Activated CD4-positive, alpha-beta memory T cell treated with anti-CD3 and anti-CD28 coated beads for 36 hours (primary cell): ENCODE measurements at regions of chr3 and their contacts with region 1.

Region 1: GRCh38 chr3:142723968-142724681 is at the start of gene TRPC1:
- DNase-seq: peak; percentile 87
- H3K4me3 Mint-ChIP-seq: peak within 1 kb of the TSS; percentile 85
- H3K27ac Mint-ChIP-seq: peak within 1 kb of the TSS; percentile 82
- H3K4me1 Mint-ChIP-seq: peaks cover 14% of the 10 kb centered on the region
- H3K27me3 Mint-ChIP-seq: peaks cover 15% of the 10 kb centered on the region
- total RNA-seq, gene TRPC1: 2.8 to 3.8 TPM

Region 2: DNA sequence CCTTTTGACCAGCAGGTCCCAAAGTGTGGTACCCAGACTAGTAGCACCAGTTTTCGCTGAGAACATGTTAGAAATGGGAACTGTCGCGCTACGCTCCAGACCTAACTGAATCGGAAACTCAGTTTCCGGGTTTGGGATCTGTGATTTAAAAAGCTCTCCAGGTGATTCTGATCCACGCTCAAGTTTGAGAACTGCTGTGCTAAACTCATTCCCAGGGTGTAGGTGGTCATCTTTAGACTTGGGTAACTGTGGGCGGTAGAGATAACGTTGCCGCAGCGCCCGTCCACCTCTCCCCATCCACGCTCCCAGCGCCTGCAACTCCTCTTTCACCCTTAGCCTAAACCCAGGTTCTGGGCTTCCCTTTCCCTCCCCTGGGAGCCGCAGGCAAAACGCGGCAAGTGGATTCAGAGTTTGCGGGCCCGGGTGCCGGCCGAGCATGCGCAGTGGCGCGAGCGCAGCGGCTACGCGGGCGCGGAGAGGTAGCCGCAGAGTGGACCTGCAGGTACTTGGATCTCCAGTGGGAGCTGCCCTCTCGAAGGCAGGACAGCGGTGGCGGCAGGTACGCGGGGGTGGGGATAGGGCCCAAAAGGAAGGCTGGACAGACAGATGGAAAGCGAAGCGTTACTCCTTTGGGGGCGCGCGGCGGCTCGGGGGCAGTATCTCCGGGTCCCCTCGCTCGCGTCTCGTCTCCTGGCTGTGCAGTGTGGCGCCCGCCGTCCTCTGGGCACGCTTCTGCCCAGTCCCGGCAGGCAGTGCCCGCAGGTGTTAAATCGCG is 128.0 kb before region 1 on chr3 and contains the start of gene PLS1:
- CTCF ChIA-PET with region 1: no interaction called
- POLR2A ChIA-PET with region 1: interaction called, 5 read pairs
- intact Hi-C with region 1: loop called (anchors 1 kb)
- DNase-seq: peak; percentile 91
- H3K4me3 Mint-ChIP-seq: peak within 1 kb of the TSS; percentile 89
- H3K27ac Mint-ChIP-seq: peak within 1 kb of the TSS; percentile 63
- H3K4me1 Mint-ChIP-seq: peaks cover 10% of the 10 kb centered on the region
- H3K27me3 Mint-ChIP-seq: peaks cover 3% of the 10 kb centered on the region
- total RNA-seq, gene PLS1: 4.5 to 5.7 TPM